Pancreas (tissue), 10 donors: ENCODE measurements at regions of chr19 and their contacts with region 1.

Region 1: GRCh38 chr19:19531951-19532805 is 3.5 kb downstream of the YJEFN3 start:
- DNase-seq: peak; percentile 63 to 98 (median 84)
- ATAC-seq: peak; percentile 86 to 90 (median 88)
- H3K4me3 ChIP-seq: no peak overlapping the region
- H3K27ac ChIP-seq: no peak overlapping the region
- H3K4me1 ChIP-seq: no peaks in the 10 kb centered on the region
- H3K27me3 ChIP-seq: no peaks in the 10 kb centered on the region
- CTCF ChIP-seq: peak; percentile 89 to 94 (median 92)

Region 2: GRCh38 chr19:19488875-19489690 is 43.1 kb before region 1 on chr19:
- intact Hi-C with region 1: no loop called
- DNase-seq: peak in 5 of 6 donors; percentile 60 to 83 (median 73)
- ATAC-seq: peak; percentile 39 to 76 (median 70)
- H3K4me3 ChIP-seq: no peak overlapping the region
- H3K27ac ChIP-seq: peak overlapping the region; percentile 59 to 73 (median 68)
- H3K4me1 ChIP-seq: peaks cover 20 to 34% (median 31%) of the 10 kb centered on the region in 3 donors
- H3K27me3 ChIP-seq: no peaks in the 10 kb centered on the region
- CTCF ChIP-seq: no peak

Region 3: GRCh38 chr19:19643158-19644053 is 111.2 kb after region 1 on chr19 and contains the start of gene GMIP:
- intact Hi-C with region 1: loop called in 2 of 3 experiments (anchors 5 kb)
- DNase-seq: peak; percentile 75 to 94 (median 84)
- ATAC-seq: peak; percentile 92 to 95 (median 94)
- H3K4me3 ChIP-seq: peak within 1 kb of the TSS; percentile 30 to 87 (median 80)
- H3K27ac ChIP-seq: peak within 1 kb of the TSS; percentile 47 to 69 (median 53)
- H3K4me1 ChIP-seq: no peaks in the 10 kb centered on the region
- H3K27me3 ChIP-seq: no peaks in the 10 kb centered on the region
- CTCF ChIP-seq: peak; percentile 66 to 85 (median 80)
- total RNA-seq, gene GMIP: 5.4 to 16.4 (median 6.6) TPM

Region 4: DNA sequence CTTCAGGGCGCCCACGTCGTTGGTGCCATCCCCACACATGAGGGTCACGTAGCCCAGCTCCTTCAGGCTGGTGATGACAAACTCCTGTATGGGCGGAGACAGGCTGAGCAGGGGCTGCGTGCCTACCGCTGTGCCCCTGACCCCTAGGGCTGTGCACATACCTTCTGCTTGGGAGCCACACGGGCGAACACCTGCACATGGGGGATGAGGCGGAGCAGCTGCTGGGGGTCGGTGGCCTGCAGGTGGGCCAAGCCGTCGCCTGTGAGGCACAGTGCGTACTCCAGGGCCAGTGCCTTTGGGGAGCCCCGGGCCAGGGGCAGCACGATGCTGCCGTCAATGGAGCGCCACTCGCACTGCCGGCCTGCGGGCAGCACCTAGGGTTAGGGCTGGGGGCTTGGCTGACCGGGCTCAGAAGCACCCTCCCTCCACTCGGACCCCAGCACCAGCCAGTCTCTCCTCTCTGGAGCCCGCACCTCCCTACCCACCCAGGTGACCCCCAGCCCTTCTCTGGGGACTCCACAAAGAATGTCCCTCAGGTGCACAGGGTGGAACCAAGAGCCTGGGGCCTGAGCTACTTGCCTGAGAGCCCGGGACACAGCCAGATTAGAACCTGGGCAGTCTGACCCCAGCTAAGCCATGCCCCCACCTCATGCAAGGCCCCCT is 117.5 kb after region 1 on chr19:
- intact Hi-C with region 1: loop called in 2 of 3 experiments (anchors 5 kb)
- DNase-seq: peak in 1 of 6 donors; percentile 70
- ATAC-seq: no peak
- H3K4me3 ChIP-seq: no peak overlapping the region
- H3K27ac ChIP-seq: no peak overlapping the region
- H3K4me1 ChIP-seq: no peaks in the 10 kb centered on the region
- H3K27me3 ChIP-seq: no peaks in the 10 kb centered on the region
- CTCF ChIP-seq: no peak

Region 5: GRCh38 chr19:19956434-19957075 is 424.4 kb after region 1 on chr19:
- intact Hi-C with region 1: loop called in 1 of 3 experiments (anchors 10 kb)
- DNase-seq: no peak
- ATAC-seq: no peak
- H3K4me3 ChIP-seq: no peak overlapping the region
- H3K27ac ChIP-seq: no peak overlapping the region
- H3K4me1 ChIP-seq: no peaks in the 10 kb centered on the region
- H3K27me3 ChIP-seq: no peaks in the 10 kb centered on the region
- CTCF ChIP-seq: no peak